Motor neuron (in vitro differentiated cells): ENCODE measurements at regions of chr12 and their contacts with region 1.

Region 1: DNA sequence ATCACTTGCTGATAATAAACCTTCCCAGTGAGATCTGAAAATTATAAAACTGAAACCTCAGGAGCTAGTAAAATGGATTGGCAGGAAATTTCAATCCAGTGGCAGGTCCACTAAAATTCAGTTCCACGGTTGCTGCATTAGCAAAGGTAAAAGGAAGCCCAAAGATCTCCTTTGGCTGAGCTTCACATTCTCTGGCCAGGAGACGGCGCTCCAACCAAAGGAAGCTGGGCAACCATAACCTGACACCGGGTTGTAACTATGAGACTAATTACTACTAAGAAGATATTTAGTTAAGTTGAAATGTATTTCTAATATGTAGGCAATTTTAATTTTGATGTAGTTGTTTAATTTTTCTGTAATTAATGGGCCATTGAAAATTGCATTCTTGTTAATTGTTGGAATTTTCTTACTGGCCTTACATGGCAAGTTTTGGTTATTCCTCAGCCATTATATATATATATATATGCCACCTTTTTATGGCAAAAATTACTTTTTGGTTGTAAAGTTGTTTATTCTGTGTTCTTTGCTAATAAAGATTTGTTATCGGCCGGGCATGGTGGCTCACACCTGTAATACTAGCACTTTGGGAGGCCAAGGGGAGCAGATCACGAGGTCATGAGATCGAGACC is 17.0 kb downstream of the OR8S1 start:
- ATAC-seq: peak in 3 of 8 experiments; percentile 69 to 82 (median 73)
- H3K4me3 ChIP-seq: no peak overlapping the region
- H3K27ac ChIP-seq: no peak overlapping the region
- H3K4me1 ChIP-seq: peaks cover 0 to 5% of the 10 kb centered on the region in 2 donors

Region 2: GRCh38 chr12:48442191-48442828 is 100.1 kb before region 1 on chr12:
- in situ Hi-C with region 1: no loop called
- ATAC-seq: peak in 2 of 8 experiments; percentile 31 to 55
- H3K4me3 ChIP-seq: no peak overlapping the region
- H3K27ac ChIP-seq: no peak overlapping the region
- H3K4me1 ChIP-seq: no peaks in the 10 kb centered on the region

Region 3: GRCh38 chr12:48613321-48613720 is 70.9 kb after region 1 on chr12:
- in situ Hi-C with region 1: loop called in 1 of 9 experiments (anchors 5 kb)
- ATAC-seq: no peak
- H3K4me3 ChIP-seq: no peak overlapping the region
- H3K27ac ChIP-seq: no peak overlapping the region
- H3K4me1 ChIP-seq: no peaks in the 10 kb centered on the region